Breast epithelium (tissue), 4 donors: ENCODE measurements at regions of chr2 and their contacts with region 1.

Region 1: GRCh38 chr2:70070541-70071268 is 16.6 kb upstream of the PCBP1 start:
- DNase-seq: peak in 1 of 2 donors; percentile 64
- H3K4me3 ChIP-seq: no peak overlapping the region
- H3K27ac ChIP-seq: peak overlapping the region; percentile 78 to 80
- H3K4me1 ChIP-seq: peaks cover 0 to 4% of the 10 kb centered on the region in 2 donors
- H3K27me3 ChIP-seq: no peaks in the 10 kb centered on the region
- CTCF ChIP-seq: peak; percentile 87 to 93 (median 87)
- POLR2A ChIP-seq: no peak

Region 2: DNA sequence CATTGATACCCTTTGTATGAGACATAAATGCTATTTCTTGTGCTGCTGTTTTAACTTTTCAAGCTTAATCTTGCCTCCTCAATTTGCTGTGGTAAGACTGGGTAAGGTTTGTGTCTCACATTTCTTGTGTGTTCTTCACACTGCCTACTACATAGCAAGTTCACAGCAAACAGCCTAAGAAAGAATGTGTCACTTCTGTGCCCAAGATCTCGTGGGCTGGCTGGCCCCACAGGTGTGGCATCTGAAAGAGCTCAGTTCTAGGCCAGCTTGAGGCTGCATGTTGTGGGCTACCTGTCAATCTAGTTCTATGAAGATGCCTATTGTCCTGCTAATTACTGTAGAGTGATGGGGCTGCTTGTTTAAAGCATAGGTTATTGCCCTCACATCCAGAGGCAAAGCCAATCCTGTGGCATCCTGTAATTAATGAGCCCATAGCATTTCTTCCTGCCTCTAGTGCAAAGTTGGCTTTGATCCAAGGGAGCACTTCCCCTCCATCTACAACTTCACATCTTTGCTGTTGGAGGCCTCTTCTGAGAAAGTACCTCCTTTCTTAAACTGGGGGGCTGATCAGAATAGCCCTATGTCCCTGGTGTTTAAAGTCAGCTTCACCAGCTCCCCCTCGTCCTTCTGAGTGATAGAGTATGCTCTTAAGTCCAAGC is 68.3 kb before region 1 on chr2:
- intact Hi-C with region 1: loop called (anchors 2 kb)
- DNase-seq: no peak
- H3K4me3 ChIP-seq: no peak overlapping the region
- H3K27ac ChIP-seq: no peak overlapping the region
- H3K4me1 ChIP-seq: no peaks in the 10 kb centered on the region
- H3K27me3 ChIP-seq: no peaks in the 10 kb centered on the region
- CTCF ChIP-seq: no peak
- POLR2A ChIP-seq: no peak

Region 3: DNA sequence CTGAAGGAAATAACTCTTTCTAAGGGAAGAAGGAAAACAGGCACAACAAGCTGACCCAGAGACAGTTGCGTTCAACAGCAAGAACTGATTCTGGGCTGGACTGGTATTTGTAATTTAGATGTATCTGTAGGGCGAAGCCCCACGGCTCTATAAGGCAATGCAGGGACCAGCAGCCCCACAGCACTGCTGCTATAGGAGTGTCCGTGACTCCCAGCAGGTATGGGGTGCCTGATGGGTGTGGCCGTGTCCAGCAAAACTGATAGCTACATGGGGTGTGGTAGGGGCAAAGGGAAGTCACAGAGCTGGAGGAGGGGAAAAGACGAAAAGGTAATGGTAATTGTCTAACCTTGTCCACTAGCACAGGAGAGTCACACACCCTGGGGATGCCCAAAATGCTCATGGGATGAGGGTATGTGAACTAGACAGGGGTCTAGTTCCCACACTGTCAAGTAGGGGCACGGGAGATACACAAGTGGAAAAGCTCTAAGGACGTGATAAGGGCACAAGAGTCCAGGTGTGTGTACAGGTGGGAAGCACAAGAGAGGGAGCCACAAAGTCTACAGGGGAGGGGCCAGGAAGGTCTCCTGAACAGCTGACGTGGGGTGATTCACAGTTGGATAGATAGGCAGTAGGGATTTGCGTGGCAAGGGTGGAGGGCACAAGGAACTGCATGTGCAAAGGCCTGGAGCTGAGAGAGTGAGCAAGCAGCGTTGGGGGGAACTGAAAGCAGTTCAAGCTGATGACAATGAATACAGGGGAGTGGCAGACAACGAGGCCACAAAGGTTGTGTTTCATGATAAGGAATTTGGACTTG is 60.7 kb before region 1 on chr2:
- intact Hi-C with region 1: loop called (anchors 2 kb)
- DNase-seq: no peak
- H3K4me3 ChIP-seq: no peak overlapping the region
- H3K27ac ChIP-seq: no peak overlapping the region
- H3K4me1 ChIP-seq: no peaks in the 10 kb centered on the region
- H3K27me3 ChIP-seq: no peaks in the 10 kb centered on the region
- CTCF ChIP-seq: no peak
- POLR2A ChIP-seq: no peak